ENCODE measurements at regions of chr2 and their contacts with region 1.

Region 1: GRCh38 chr2:101569886-101570520 is 95.1 kb upstream of the RFX8 start:
- DNase-seq: no peak
- H3K4me3 Mint-ChIP-seq: no peak overlapping the region
- H3K27ac Mint-ChIP-seq: no peak overlapping the region
- H3K4me1 Mint-ChIP-seq: peaks cover 10% of the 10 kb centered on the region
- H3K27me3 Mint-ChIP-seq: no peaks in the 10 kb centered on the region

Region 2: GRCh38 chr2:100013892-100014677 is 1555.9 kb before region 1 on chr2:
- CTCF ChIA-PET with region 1: no interaction called
- POLR2A ChIA-PET with region 1: no interaction called
- intact Hi-C with region 1: no loop called
- DNase-seq: no peak
- H3K4me3 Mint-ChIP-seq: no peak overlapping the region
- H3K27ac Mint-ChIP-seq: no peak overlapping the region
- H3K4me1 Mint-ChIP-seq: no peaks in the 10 kb centered on the region
- H3K27me3 Mint-ChIP-seq: no peaks in the 10 kb centered on the region

Region 3: GRCh38 chr2:101473911-101474701 is 95.9 kb before region 1 on chr2:
- CTCF ChIA-PET with region 1: no interaction called
- POLR2A ChIA-PET with region 1: no interaction called
- intact Hi-C with region 1: no loop called
- DNase-seq: peak; percentile 65
- H3K4me3 Mint-ChIP-seq: peak overlapping the region; percentile 80
- H3K27ac Mint-ChIP-seq: peak overlapping the region; percentile 82
- H3K4me1 Mint-ChIP-seq: peaks cover 7% of the 10 kb centered on the region
- H3K27me3 Mint-ChIP-seq: peaks cover 2% of the 10 kb centered on the region

Region 4: DNA sequence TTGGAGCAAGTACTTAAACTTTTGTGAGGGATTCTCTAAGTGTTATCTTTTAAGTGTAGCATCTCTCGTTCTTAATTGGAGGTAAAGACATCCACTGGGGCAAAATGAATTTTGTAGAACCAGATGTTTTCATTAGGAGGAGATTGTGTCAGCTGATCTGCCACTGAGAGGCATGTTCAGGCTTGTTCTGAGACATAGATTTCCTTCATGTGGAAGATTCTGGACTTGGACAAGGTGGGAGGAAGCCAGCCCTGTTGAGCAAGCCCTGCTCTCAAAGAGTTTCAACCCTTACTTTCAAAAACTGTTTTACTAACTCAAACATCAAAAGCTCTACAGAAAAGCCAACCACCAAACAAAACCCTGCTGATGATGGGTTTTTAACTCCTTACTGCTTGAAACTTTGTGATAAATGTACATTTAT is 134.1 kb after region 1 on chr2:
- CTCF ChIA-PET with region 1: no interaction called
- POLR2A ChIA-PET with region 1: no interaction called
- intact Hi-C with region 1: loop called (anchors 5 kb)
- DNase-seq: peak; percentile 59
- H3K4me3 Mint-ChIP-seq: peak overlapping the region; percentile 62
- H3K27ac Mint-ChIP-seq: peak overlapping the region; percentile 87
- H3K4me1 Mint-ChIP-seq: peaks cover 74% of the 10 kb centered on the region
- H3K27me3 Mint-ChIP-seq: no peaks in the 10 kb centered on the region

Region 5: DNA sequence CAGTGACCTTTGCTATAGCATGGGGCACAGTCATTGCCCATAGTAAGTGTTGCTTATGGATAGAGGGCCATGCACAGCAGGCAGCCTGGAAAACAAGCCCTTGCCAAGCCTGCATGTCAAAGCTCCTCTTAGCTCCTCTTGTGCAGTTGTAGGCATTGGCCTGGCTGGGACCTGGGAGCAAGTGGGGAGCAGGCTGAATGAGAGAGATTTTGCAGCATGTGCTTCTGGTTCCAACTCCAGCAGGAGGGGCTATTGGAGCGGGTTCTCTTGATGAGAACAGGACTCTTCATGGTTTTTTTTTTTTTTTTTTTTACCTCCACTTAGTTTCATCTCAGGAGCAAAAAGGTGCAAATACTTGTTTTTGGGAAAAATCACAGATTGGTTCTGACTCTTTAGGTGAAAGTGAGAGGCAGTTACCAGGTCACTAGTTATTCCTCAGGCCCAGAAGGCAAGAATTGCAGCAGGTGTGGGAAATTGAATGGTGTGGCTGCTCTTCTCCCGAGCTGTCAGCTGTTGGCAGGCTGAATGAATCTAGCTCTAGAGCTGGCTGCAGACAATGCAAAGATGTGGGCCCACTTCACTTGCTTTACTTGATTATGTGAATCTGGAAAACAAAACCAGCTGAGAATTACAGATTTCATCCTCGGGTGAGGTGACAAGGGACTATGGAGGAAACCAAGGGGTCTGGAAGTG is 223.4 kb after region 1 on chr2:
- CTCF ChIA-PET with region 1: no interaction called
- POLR2A ChIA-PET with region 1: no interaction called
- intact Hi-C with region 1: no loop called
- DNase-seq: no peak
- H3K4me3 Mint-ChIP-seq: no peak overlapping the region
- H3K27ac Mint-ChIP-seq: no peak overlapping the region
- H3K4me1 Mint-ChIP-seq: peaks cover 51% of the 10 kb centered on the region
- H3K27me3 Mint-ChIP-seq: no peaks in the 10 kb centered on the region